Activated CD4-positive, alpha-beta T cell treated with anti-CD3 and anti-CD28 coated beads, Interleukin-2, amount 10 ng/mL, durations not matched to agents 24 days and 14 days (primary cell): ENCODE measurements at regions of chr5 and their contacts with region 1.

Region 1: GRCh38 chr5:40502736-40503135 is 177.0 kb upstream of the PTGER4 start:
- DNase-seq: no peak
- H3K4me3 Mint-ChIP-seq: no peak overlapping the region
- H3K27ac Mint-ChIP-seq: no peak overlapping the region
- H3K4me1 Mint-ChIP-seq: peaks cover 3% of the 10 kb centered on the region
- H3K27me3 Mint-ChIP-seq: no peaks in the 10 kb centered on the region

Region 2: GRCh38 chr5:40570408-40571129 is 67.8 kb after region 1 on chr5:
- intact Hi-C with region 1: loop called (anchors 5 kb)
- DNase-seq: no peak
- H3K4me3 Mint-ChIP-seq: no peak overlapping the region
- H3K27ac Mint-ChIP-seq: peak overlapping the region; percentile 29
- H3K4me1 Mint-ChIP-seq: peaks cover 21% of the 10 kb centered on the region
- H3K27me3 Mint-ChIP-seq: no peaks in the 10 kb centered on the region